CD8-positive, alpha-beta memory T cell (primary cell): ENCODE measurements at regions of chr1 and their contacts with region 1.

Region 1: GRCh38 chr1:169809370-169810095 is 14.8 kb upstream of the METTL18 start:
- DNase-seq: peak in 3 of 5 donors; percentile 1 to 23 (median 10)
- H3K4me3 ChIP-seq: no peak overlapping the region
- H3K4me3 Mint-ChIP-seq: no peak overlapping the region
- H3K27ac ChIP-seq: no peak overlapping the region
- H3K27ac Mint-ChIP-seq: peak overlapping the region in 1 of 8 donors; percentile 42
- H3K4me1 ChIP-seq: peaks cover 7% of the 10 kb centered on the region
- H3K4me1 Mint-ChIP-seq: peaks cover 3 to 8% (median 4%) of the 10 kb centered on the region in 3 donors
- H3K27me3 ChIP-seq: no peaks in the 10 kb centered on the region
- H3K27me3 Mint-ChIP-seq: no peaks in the 10 kb centered on the region

Region 2: DNA sequence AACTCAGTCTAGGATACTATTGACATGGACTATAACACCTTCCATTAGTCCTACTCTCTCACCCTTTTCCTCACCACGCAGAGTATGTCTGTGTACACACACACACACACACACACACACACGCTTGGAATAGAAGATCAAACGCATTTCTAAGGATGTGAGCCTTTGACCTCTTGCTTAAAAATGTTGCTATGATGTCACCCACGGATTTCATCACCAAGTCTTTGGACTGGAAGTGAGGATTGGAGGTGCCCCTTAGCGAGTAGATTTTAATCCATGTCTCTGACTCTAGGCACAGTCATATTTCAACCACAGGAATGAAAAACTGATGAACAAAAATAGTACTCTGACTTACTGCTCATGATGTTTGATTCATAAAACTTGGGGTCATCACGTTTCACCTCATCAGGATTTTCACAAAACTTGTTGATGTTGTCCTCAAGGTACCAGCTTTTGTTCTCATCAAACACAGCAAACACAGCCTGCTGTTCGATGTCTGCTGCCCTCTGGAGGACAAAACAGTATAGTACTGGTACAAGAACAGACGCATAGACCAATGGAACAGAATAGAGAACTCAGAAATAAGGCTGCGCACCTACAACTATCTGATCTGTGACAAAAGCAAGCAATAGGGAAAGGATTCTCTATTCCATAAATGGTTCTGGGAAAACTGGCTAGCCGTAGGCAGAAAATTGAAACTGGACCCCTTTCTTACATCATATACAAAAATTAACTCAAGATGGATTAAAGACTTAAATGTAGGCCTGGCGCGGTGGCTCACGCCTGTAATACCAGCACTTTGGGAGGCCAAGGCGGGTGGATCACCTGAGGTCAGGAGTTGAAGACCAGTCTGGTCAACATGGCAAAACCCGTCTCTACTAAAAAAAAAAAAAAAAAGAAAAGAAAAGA is 263.2 kb before region 1 on chr1:
- CTCF ChIA-PET with region 1: interaction called, 22 read pairs
- POLR2A ChIA-PET with region 1: no interaction called
- DNase-seq: peak; percentile 12 to 68 (median 60)
- H3K4me3 ChIP-seq: no peak overlapping the region
- H3K4me3 Mint-ChIP-seq: no peak overlapping the region
- H3K27ac ChIP-seq: no peak overlapping the region
- H3K27ac Mint-ChIP-seq: peak overlapping the region in 1 of 8 donors; percentile 34
- H3K4me1 ChIP-seq: no peaks in the 10 kb centered on the region
- H3K4me1 Mint-ChIP-seq: no peaks in the 10 kb centered on the region
- H3K27me3 ChIP-seq: no peaks in the 10 kb centered on the region
- H3K27me3 Mint-ChIP-seq: peaks cover 2 to 12% of the 10 kb centered on the region in 2 donors

Region 3: DNA sequence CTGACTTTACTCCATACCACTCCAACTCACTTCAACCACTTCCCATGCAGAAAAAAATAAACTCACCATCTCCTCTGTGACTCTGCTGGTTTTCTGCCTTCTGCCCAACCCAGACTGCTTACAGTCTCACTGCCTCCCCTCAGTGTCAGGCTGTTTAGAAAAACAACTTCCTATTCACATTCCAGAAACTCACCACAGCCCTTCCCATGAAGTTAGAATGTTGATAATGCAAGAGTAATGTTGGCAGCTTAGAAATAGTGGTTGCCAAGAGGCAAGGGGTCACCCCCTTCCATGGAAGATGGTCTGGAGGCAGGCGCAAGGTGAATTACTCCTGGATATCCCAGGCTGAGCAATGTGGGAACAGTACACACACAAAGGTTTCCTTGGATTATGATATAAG is 179.5 kb before region 1 on chr1 and contains the start of gene SELP:
- CTCF ChIA-PET with region 1: no interaction called
- POLR2A ChIA-PET with region 1: no interaction called
- DNase-seq: no peak
- H3K4me3 ChIP-seq: no peak within 1 kb of the TSS
- H3K4me3 Mint-ChIP-seq: no peak within 1 kb of the TSS
- H3K27ac ChIP-seq: no peak within 1 kb of the TSS
- H3K27ac Mint-ChIP-seq: peak within 1 kb of the TSS in 1 of 8 donors; percentile 58
- H3K4me1 ChIP-seq: peaks cover 41% of the 10 kb centered on the region
- H3K4me1 Mint-ChIP-seq: peaks cover 17 to 36% (median 22%) of the 10 kb centered on the region in 3 donors
- H3K27me3 ChIP-seq: no peaks in the 10 kb centered on the region
- H3K27me3 Mint-ChIP-seq: peaks cover 0 to 19% of the 10 kb centered on the region in 2 donors
- total RNA-seq, gene SELP: 0.31 to 0.75 TPM